A549 (cell line): ENCODE measurements at regions of chr2 and their contacts with region 1.

Region 1: GRCh38 chr2:233026192-233026813 is 6.2 kb upstream of the NEU2 start:
- DNase-seq: peak in 1 of 2 experiments; percentile 19
- ATAC-seq: no peak
- H3K4me3 ChIP-seq: no peak overlapping the region
- H3K27ac ChIP-seq: peak overlapping the region; percentile 57 to 61
- H3K4me1 ChIP-seq: peaks cover 23% of the 10 kb centered on the region
- CTCF ChIP-seq: no peak
- EP300 ChIP-seq: no peak
- POLR2A ChIP-seq: no peak
- RAD21 ChIP-seq: no peak

Region 2: DNA sequence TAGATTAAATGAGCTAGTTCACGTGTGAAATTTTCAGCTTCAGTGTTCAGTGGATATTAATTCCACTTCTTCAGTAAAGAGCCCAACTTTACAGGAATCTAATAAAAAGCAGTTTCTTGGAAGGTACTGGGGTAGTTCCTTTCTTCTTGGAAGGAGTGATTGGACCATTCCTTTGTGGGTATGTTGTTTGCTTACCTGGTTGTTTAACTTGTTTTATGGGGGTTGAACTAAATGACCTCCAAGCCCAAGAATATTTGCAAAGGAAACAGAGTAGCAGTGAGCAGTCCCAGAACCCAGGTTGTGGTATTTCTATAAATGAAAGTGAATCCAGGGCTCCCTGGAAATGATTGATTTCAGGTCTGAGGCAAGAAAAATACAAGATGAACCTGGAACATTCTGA is 281.3 kb before region 1 on chr2:
- CTCF ChIA-PET with region 1: no interaction called
- POLR2A ChIA-PET with region 1: no interaction called
- DNase-seq: no peak
- ATAC-seq: no peak
- H3K4me3 ChIP-seq: no peak overlapping the region
- H3K27ac ChIP-seq: no peak overlapping the region
- H3K4me1 ChIP-seq: no peaks in the 10 kb centered on the region
- CTCF ChIP-seq: no peak
- EP300 ChIP-seq: no peak
- POLR2A ChIP-seq: no peak
- RAD21 ChIP-seq: no peak

Region 3: GRCh38 chr2:232898592-232899543 is 127.4 kb before region 1 on chr2:
- CTCF ChIA-PET with region 1: interaction called, 10 read pairs
- POLR2A ChIA-PET with region 1: no interaction called
- DNase-seq: peak in 1 of 2 experiments; percentile 37
- ATAC-seq: no peak
- H3K4me3 ChIP-seq: no peak overlapping the region
- H3K27ac ChIP-seq: 0 out of 6 replicates have a peak overlapping the region, but pooled peaks of 1 of the 2 experiments have one; percentile 51
- H3K4me1 ChIP-seq: peaks cover 23% of the 10 kb centered on the region
- CTCF ChIP-seq: no peak
- EP300 ChIP-seq: no peak
- POLR2A ChIP-seq: no peak
- RAD21 ChIP-seq: no peak

Region 4: DNA sequence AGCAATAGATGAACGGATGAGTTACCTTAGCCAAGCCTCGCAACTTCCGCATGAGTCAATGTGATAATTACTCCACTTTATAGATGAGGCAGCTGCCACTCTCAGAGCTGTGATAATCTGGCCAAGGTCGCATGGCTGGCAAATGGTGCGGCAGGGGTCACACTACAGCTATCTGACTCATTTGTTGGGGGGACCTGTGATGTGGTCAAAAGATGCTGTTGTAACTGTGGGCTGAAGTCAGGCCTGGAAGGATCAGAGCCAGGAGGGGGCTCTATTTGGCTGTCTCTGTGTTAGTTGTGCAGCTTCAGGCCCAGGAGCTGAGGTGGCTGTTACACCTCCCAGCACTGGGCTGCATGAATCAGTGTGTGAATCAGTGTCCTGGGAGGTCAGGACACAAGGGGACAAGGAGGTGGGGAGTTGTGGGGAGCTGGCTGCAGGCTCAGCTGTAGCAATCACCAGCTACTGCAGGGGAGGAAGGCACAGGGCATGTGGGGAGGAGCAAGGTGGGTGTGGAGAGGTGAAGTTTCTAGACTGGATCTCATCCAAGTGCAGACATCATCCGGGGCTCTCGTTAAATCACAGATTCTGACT is 46.3 kb before region 1 on chr2:
- CTCF ChIA-PET with region 1: interaction called, 119 read pairs
- POLR2A ChIA-PET with region 1: no interaction called
- DNase-seq: peak; percentile 79 to 88
- ATAC-seq: peak; percentile 92 to 97
- H3K4me3 ChIP-seq: no peak overlapping the region
- H3K27ac ChIP-seq: peak overlapping the region; percentile 74 to 86
- H3K4me1 ChIP-seq: peaks cover 36% of the 10 kb centered on the region
- CTCF ChIP-seq: peak; percentile 62
- EP300 ChIP-seq: peak in 1 of 2 experiments; percentile 39; a peak in 1 of 5 replicates
- POLR2A ChIP-seq: no peak
- RAD21 ChIP-seq: peak; percentile 87 to 88

Region 5: GRCh38 chr2:233012301-233012971 is 13.9 kb before region 1 on chr2:
- CTCF ChIA-PET with region 1: interaction called, 16 read pairs
- POLR2A ChIA-PET with region 1: no interaction called
- DNase-seq: no peak
- ATAC-seq: peak in 1 of 2 experiments; percentile 50; a peak in 3 of 6 replicates
- H3K4me3 ChIP-seq: no peak overlapping the region
- H3K27ac ChIP-seq: peak overlapping the region; percentile 51 to 73; a peak in 5 of 6 replicates
- H3K4me1 ChIP-seq: peaks cover 25% of the 10 kb centered on the region
- CTCF ChIP-seq: no peak
- EP300 ChIP-seq: no peak
- POLR2A ChIP-seq: no peak
- RAD21 ChIP-seq: no peak

Region 6: DNA sequence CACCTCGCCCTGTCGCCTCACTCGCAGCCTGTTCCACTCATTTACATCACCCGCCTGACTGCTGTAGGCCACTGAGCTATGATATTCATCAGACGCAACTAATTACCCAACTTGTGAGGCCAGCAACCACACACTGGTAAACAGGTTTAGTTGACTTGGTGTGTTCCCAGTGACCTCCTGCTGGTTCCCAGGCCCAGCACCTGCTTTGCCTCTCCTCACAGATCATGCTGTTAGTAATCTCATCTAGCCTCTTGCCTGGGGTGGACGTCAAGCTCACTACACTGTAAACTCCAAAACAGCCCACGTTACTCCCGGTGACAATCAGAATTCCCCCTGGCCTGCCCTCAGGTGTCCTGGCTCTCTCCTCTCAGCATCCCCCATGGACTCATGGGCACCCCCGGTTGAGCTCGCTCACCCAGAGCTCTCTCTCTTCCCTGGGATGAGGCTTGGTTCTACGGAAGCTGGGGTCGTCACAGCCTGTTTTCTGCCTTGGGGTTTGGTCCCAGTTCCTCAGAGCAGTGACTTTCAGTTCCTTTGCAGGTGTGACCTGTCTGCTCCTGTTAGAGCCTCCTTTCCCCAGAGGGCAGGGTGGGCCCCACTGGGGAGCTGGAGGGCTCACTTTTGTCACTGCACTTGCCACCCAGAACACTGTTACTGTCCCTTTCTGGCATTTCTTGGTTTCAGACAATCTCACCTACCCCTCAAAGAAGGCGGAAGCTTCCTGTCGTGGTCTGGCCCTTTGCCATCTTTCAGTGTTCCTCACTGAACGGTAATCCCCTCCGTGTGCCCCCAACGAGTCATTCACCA is 74.1 kb after region 1 on chr2:
- CTCF ChIA-PET with region 1: no interaction called
- POLR2A ChIA-PET with region 1: no interaction called
- DNase-seq: no peak
- ATAC-seq: no peak
- H3K4me3 ChIP-seq: no peak overlapping the region
- H3K27ac ChIP-seq: no peak overlapping the region
- H3K4me1 ChIP-seq: no peaks in the 10 kb centered on the region
- CTCF ChIP-seq: no peak
- EP300 ChIP-seq: no peak
- POLR2A ChIP-seq: no peak
- RAD21 ChIP-seq: no peak